Calu3 (cell line): ENCODE measurements at regions of chr17 and their contacts with region 1.

Region 1: DNA sequence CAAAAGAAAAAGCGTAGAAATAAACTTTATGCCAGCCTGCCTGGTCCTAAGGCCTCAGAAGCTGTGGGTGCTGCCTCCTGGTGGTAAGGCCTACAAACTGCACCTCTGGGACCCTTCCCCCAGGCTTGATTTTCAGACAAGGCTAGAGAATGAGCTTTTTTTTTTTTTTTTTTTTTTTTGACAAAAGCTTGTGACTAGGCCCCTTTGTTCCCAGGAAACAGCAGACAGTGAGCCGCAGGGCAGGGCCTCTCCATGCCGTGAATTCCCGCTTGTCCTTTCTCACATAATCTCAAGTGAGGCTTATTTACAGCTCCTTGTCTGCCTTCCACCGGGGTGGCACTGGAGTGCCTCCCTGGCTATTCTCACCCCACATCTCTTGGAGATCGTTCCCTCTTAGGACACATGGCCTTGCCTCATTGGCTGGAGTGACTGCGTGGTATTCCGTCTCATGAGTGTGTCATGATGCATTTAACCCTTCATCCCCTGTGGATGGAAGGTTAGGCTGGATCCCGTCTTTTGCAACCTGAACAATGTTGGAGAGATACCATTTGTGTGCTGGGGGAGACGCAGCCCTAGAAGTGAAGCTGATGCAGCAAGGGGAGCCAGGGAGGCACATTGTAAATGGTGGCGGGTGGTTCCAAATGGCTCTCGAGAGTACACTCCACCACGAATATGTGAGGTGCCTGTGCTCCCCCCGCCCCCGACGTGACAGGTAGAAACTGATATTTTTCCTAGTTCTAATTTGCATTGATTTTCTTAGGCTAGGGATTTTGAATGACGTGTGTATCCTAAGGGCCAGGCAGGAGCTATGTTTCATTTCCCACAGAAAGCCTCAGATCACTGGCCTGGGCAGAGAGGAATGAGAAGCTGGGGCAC is 49.6 kb downstream of the USP22 start:
- DNase-seq: peak; percentile 65
- H3K4me3 Mint-ChIP-seq: no peak overlapping the region
- H3K27ac Mint-ChIP-seq: no peak overlapping the region
- H3K4me1 Mint-ChIP-seq: no peaks in the 10 kb centered on the region
- H3K27me3 Mint-ChIP-seq: peaks cover 27% of the 10 kb centered on the region
- CTCF ChIP-seq: peak; percentile 45

Region 2: DNA sequence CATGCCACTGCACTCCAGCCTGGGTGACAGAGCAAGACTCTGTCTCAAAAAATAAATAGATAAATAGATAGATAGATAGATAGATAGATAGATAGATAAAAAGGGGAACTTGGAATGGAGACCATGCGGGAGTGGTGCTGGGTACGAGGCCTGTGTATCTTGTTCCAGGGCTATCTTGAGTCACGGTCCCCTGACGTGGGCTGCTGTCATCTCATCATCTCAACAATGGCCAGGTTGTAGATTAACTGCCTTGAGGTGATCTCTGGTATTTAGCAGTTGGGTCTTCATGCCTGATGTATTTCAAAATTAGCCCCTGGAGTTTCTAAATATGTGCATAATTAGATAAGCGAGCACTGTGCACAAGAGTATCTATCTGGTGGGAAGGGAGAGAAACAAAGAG is 201.6 kb before region 1 on chr17:
- CTCF ChIA-PET with region 1: no interaction called
- intact Hi-C with region 1: loop called (anchors 5 kb)
- DNase-seq: no peak
- H3K4me3 Mint-ChIP-seq: no peak overlapping the region
- H3K27ac Mint-ChIP-seq: no peak overlapping the region
- H3K4me1 Mint-ChIP-seq: no peaks in the 10 kb centered on the region
- H3K27me3 Mint-ChIP-seq: peaks cover 16% of the 10 kb centered on the region
- CTCF ChIP-seq: no peak

Region 3: GRCh38 chr17:20952184-20952583 is 41.0 kb before region 1 on chr17:
- CTCF ChIA-PET with region 1: no interaction called
- intact Hi-C with region 1: loop called (anchors 5 kb)
- DNase-seq: no peak
- H3K4me3 Mint-ChIP-seq: no peak overlapping the region
- H3K27ac Mint-ChIP-seq: no peak overlapping the region
- H3K4me1 Mint-ChIP-seq: peaks cover 11% of the 10 kb centered on the region
- H3K27me3 Mint-ChIP-seq: peaks cover 27% of the 10 kb centered on the region
- CTCF ChIP-seq: no peak

Region 4: DNA sequence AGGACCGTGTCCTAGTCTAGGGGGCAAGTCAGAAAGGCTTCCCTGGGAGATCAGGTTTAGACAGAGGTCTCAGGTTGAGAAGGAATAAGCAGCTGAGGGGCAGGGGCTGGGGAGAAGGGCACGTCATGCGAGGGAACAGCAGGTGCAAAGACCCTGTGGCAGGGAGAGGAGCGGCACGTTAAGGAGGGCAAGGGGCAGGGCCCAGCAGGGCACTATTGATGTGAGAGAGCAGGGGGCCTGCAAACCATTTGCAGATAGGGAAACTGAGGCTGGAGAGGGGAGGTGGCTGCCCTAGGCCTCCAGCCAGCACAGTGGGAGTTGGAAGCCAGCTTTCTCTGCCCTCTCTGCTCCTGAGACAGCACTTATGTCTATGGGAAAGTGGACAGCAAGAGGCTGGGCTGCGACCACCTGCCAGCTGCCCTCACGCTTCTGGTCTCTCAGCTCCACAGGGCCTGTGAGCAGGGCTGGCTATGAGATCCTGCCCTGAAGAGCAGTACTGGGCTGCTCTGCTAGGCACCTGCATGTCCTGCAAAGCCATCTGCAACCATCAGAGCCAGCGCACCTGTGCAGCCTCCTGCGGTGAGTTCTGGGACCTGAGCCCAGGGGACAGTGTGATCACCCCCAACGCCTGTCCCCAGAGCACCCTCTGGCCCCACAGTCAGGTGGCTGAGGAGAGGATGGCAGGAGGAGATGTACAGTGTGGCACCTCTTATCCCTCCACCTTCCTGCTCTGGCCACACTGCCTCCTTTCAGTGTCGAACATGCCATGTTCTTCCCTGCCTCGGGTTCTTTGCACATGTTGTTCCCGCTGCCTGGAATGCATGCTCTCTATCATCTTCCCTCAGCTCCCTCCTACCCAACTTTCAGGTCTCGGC is 11.9 kb before region 1 on chr17:
- CTCF ChIA-PET with region 1: no interaction called
- intact Hi-C with region 1: no loop called
- DNase-seq: no peak
- H3K4me3 Mint-ChIP-seq: no peak overlapping the region
- H3K27ac Mint-ChIP-seq: no peak overlapping the region
- H3K4me1 Mint-ChIP-seq: no peaks in the 10 kb centered on the region
- H3K27me3 Mint-ChIP-seq: peaks cover 63% of the 10 kb centered on the region
- CTCF ChIP-seq: no peak